PC-9 (cell line): ENCODE measurements at regions of chr5 and their contacts with region 1.

Region 1: DNA sequence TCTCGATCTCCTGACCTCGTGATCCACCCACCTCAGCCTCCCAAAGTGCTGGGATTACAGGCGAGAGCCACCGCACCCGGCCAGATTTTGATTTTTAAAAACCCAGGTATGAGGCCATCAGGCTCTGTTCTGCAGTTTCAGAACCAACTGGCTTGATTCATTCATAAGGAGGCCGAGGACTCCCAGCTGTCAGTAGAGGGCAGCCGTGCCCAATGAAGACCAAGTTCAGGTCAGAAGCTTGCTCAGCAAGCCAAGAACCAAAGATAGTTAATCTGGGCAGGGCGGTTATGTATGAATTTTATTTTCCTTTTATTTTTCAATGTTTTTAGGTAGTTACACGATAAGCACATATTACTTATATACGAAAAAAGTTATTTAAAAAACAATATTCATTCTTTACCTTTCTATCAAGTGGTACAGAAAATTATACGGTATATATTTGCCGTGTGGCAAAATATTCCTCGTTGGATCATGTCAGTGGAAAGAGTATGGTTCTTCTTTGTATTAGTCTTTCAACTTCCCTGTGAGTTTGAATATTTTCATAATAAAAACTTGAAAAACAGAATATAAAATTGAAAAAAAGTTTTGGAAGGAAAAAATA is 18.0 kb downstream of the MGAT1 start:
- DNase-seq: peak; percentile 43 to 72
- H3K4me3 ChIP-seq: no peak overlapping the region
- H3K27ac ChIP-seq: no peak overlapping the region
- H3K4me1 ChIP-seq: peaks cover 16% of the 10 kb centered on the region
- H3K27me3 ChIP-seq: no peaks in the 10 kb centered on the region
- CTCF ChIP-seq: peak; percentile 74

Region 2: DNA sequence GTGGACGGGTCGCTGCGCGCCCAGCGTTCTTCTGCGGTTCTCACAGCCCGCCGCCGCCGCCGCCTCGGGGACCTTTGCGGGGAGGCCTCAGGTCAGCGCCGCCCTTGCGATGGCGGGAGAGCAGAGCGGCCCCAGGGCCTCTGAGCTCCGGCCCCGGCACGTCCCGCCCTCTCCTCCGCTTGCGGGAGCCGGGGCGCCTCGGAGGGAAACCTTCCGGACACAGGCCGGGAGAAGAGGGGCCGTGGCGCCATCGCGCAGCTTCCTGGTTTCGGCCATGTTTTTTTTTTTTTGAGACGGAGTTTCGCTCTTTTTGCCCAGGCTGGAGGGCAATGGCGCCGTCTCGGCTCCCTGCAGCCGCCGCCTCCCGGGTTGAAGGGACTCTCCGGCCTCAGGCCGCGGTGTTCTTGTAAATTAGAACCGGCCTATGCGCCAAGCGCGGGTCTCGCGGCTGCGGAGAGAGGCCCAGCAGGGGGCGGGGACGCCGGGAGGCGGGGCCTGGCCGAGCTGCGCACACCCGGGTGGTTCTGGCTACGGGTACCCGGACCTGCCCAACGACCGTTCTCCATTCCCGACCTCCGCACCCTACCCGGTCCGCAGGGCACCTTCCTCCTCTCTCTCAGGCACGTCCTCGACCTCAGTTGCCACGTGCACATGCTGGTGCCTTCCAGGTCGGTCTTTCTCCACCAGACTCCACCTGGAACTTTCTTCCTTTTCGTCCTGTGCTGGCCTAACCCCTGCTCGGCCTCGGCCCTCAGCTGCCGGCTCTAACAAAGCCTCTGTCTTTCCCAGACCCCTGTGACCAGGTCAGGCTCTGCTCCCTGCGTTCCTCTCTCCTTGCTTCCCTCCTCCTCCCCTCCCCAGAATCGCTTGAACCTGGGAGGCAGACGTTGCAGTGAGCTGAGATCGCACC is 46.8 kb after region 1 on chr5:
- CTCF ChIA-PET with region 1: no interaction called
- POLR2A ChIA-PET with region 1: interaction called, 3 read pairs
- intact Hi-C with region 1: loop called (anchors 2 kb)
- DNase-seq: peak; percentile 49 to 82
- H3K4me3 ChIP-seq: peak overlapping the region; percentile 72
- H3K27ac ChIP-seq: peak overlapping the region; percentile 72
- H3K4me1 ChIP-seq: peaks cover 23% of the 10 kb centered on the region
- H3K27me3 ChIP-seq: no peaks in the 10 kb centered on the region
- CTCF ChIP-seq: 0 out of 2 replicates have a peak, but pooled peaks have one; percentile 27

Region 3: GRCh38 chr5:181028032-181028819 is 243.6 kb after region 1 on chr5:
- CTCF ChIA-PET with region 1: no interaction called
- POLR2A ChIA-PET with region 1: no interaction called
- intact Hi-C with region 1: no loop called
- DNase-seq: no peak
- H3K4me3 ChIP-seq: no peak overlapping the region
- H3K27ac ChIP-seq: no peak overlapping the region
- H3K4me1 ChIP-seq: no peaks in the 10 kb centered on the region
- H3K27me3 ChIP-seq: peaks cover 26% of the 10 kb centered on the region
- CTCF ChIP-seq: no peak

Region 4: DNA sequence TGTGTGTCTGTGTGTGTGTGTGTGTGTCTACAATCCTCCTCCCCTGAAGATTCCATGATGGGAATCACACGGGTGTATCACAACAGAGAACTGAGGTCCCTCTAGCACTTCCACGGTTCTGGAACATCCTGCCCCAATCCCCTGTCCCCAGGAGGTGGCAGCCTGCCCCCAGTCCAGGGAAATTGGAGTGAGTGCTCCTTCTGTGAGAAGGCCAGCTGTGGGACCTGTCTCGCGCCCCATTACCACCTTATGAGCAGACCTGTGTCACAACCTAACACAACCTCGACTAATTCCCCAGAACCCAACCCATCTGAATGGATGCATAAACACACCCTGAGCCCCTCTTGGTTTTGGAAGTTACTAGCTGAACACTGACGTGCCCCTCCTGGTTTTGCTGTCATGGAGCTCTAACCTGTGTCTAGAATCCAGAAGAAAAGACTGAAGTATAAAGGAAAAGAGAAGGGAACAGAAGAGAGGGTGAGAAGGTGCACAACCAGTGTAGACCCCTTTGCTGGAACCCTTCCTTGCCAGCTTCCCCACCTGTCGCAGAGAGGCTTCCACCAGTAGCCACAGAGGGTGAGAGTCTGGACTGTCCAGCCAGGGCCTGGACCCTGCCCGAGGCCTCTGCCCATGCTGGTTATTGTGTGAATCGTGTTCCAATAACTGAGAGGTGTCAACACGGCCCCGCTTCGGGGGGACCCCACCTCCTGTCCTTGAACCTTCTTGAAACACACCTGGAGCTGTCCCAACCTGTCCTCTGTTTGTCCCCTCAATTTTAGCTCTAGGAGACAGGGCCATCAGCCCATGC is 258.9 kb after region 1 on chr5:
- CTCF ChIA-PET with region 1: no interaction called
- POLR2A ChIA-PET with region 1: no interaction called
- intact Hi-C with region 1: loop called (anchors 5 kb)
- DNase-seq: no peak
- H3K4me3 ChIP-seq: no peak overlapping the region
- H3K27ac ChIP-seq: no peak overlapping the region
- H3K4me1 ChIP-seq: no peaks in the 10 kb centered on the region
- H3K27me3 ChIP-seq: peaks cover 90% of the 10 kb centered on the region
- CTCF ChIP-seq: peak; percentile 34

Region 5: GRCh38 chr5:181181650-181182565 is 397.3 kb after region 1 on chr5:
- CTCF ChIA-PET with region 1: no interaction called
- POLR2A ChIA-PET with region 1: no interaction called
- intact Hi-C with region 1: loop called (anchors 1 kb)
- DNase-seq: peak; percentile 76 to 78
- H3K4me3 ChIP-seq: no peak overlapping the region
- H3K27ac ChIP-seq: no peak overlapping the region
- H3K4me1 ChIP-seq: peaks cover 18% of the 10 kb centered on the region; the same call in 1 of the 2 replicates
- H3K27me3 ChIP-seq: no peaks in the 10 kb centered on the region
- CTCF ChIP-seq: peak; percentile 76